CD8-positive, alpha-beta T cell (primary cell): ENCODE measurements at regions of chr22 and their contacts with region 1.

Region 1: GRCh38 chr22:32389685-32390084 is 22.4 kb downstream of the RTCB start:
- DNase-seq: peak in 2 of 9 experiments; percentile 16 to 17
- ATAC-seq: no peak
- H3K4me3 ChIP-seq: no peak overlapping the region
- H3K4me3 Mint-ChIP-seq: no peak overlapping the region
- H3K27ac ChIP-seq: no peak overlapping the region
- H3K27ac Mint-ChIP-seq: peak overlapping the region; percentile 34
- H3K4me1 ChIP-seq: no peaks in the 10 kb centered on the region
- H3K4me1 Mint-ChIP-seq: no peaks in the 10 kb centered on the region
- H3K27me3 ChIP-seq: no peaks in the 10 kb centered on the region
- H3K27me3 Mint-ChIP-seq: no peaks in the 10 kb centered on the region
- CTCF ChIP-seq: no peak

Region 2: DNA sequence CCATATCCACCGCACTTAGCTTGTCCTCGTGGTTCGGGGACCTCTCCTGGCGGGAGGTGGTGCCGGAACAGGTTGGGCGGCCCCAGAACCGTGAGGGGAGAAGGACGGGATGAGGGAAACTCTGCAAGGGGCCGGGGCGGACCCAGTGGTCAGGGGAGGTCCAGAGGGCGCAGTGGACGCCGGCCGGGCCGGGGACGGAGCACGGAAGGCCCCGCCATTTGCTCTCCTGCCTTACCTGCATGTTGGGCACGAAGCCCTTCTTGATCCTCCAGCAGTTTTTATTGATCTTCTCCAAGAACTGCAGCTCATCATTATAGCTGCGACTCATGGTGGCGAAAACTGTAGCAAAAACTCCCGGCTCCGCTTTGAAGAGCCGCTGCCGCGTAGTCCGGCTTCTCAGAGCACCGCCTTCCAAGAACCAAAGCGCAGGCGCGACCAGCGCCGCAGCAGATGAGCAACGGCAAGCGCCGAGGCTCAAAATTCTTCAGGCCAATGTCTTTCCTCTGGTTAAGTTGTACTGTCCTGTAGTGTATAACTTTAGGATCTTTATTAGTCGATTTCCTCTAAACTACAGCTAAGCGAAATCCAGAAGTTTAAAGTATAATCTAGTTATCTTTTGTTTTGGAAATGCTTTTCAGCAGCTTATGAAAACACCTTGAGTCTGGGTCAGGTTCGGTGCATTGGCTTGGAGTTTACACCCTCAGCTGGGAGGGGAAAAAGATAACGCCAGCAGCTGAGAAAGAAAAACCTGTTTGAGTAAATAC is 22.3 kb after region 1 on chr22 and contains the start of gene RTCB:
- CTCF ChIA-PET with region 1: interaction called, 5 read pairs
- POLR2A ChIA-PET with region 1: no interaction called
- intact Hi-C with region 1: loop called in 1 of 2 experiments (anchors 1 kb)
- DNase-seq: peak; percentile 88 to 96 (median 92)
- ATAC-seq: peak; percentile 88
- H3K4me3 ChIP-seq: peak within 1 kb of the TSS; percentile 82 to 94
- H3K4me3 Mint-ChIP-seq: peak within 1 kb of the TSS; percentile 98
- H3K27ac ChIP-seq: peak within 1 kb of the TSS; percentile 56 to 72
- H3K27ac Mint-ChIP-seq: peak within 1 kb of the TSS; percentile 96
- H3K4me1 ChIP-seq: peaks cover 22% of the 10 kb centered on the region
- H3K4me1 Mint-ChIP-seq: peaks cover 50% of the 10 kb centered on the region
- H3K27me3 ChIP-seq: peaks cover 0 to 2% of the 10 kb centered on the region in 2 experiments
- H3K27me3 Mint-ChIP-seq: peaks cover 3% of the 10 kb centered on the region
- CTCF ChIP-seq: no peak
- total RNA-seq, gene RTCB: 42.8 to 46.5 TPM